ENCODE measurements at regions of chr19 and their contacts with region 1.

Region 1: GRCh38 chr19:1064661-1065605 is 2.0 kb upstream of the ARHGAP45 start:
- DNase-seq: peak in 9 of 10 donors; percentile 59 to 78 (median 68)
- ATAC-seq: peak; percentile 21 to 30
- H3K4me3 Mint-ChIP-seq: peak overlapping the region; percentile 40 to 92 (median 74)
- H3K27ac Mint-ChIP-seq: peak overlapping the region in 9 of 10 donors; percentile 76 to 94 (median 91)
- H3K4me1 Mint-ChIP-seq: peaks cover 16 to 46% (median 34%) of the 10 kb centered on the region in 4 donors
- H3K27me3 Mint-ChIP-seq: no peaks in the 10 kb centered on the region

Region 2: DNA sequence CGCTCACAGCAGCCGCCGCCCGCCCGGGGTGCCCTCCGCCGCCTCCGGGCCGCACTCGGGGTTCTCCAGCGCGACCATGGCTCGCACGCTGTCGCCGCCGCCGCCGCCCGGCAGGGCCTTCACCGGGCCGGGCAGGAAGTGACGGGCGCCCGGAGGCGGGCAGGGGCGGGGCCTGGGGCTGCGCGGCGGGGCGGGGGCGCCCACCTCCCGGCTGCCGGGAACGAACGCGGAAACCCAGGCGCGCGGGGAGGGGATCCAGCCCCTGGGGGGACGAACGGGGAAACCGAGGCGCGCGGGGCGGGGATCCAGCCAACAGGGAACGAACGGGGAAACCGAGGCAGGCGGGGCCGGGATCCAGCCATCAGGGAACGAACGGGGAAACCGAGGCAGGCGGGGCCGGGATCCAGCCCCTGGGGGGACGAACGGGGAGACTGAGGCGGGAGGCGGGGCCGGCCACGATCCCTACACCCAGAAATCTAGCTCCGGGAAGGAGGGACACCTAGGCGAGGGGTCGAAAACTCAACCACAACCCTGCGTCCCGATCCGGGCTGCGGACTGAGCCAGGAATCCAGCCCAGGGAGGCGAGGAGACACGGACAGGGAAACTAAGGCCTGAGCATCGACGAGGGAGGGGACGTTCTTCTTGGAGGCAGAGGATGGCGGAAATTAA is 151.7 kb before region 1 on chr19 and contains the start of gene R3HDM4:
- POLR2A ChIA-PET with region 1: interaction called, 13 read pairs
- DNase-seq: peak; percentile 75 to 89 (median 82)
- ATAC-seq: peak; percentile 40 to 46
- H3K4me3 Mint-ChIP-seq: peak within 1 kb of the TSS; percentile 81 to 92 (median 85)
- H3K27ac Mint-ChIP-seq: peak within 1 kb of the TSS; percentile 80 to 98 (median 94)
- H3K4me1 Mint-ChIP-seq: peaks cover 15 to 41% (median 31%) of the 10 kb centered on the region in 4 donors
- H3K27me3 Mint-ChIP-seq: peaks cover 0 to 2% (median 0%) of the 10 kb centered on the region in 5 donors
- polyA plus RNA-seq, gene R3HDM4: 137 to 238 (median 182) TPM

Region 3: GRCh38 chr19:1020868-1021425 is 44.0 kb before region 1 on chr19 and contains the start of gene TMEM259:
- POLR2A ChIA-PET with region 1: interaction called, 1,566 read pairs
- DNase-seq: peak in 9 of 10 donors; percentile 94 to 99 (median 97)
- ATAC-seq: peak; percentile 84 to 86
- H3K4me3 Mint-ChIP-seq: peak within 1 kb of the TSS; percentile 86 to 94 (median 91)
- H3K27ac Mint-ChIP-seq: peak within 1 kb of the TSS; percentile 96 to 100 (median 99)
- H3K4me1 Mint-ChIP-seq: peaks cover 18 to 53% (median 47%) of the 10 kb centered on the region in 4 donors
- H3K27me3 Mint-ChIP-seq: peaks cover 0 to 6% (median 0%) of the 10 kb centered on the region in 5 donors
- polyA plus RNA-seq, gene TMEM259: 37.9 to 77.0 (median 52.0) TPM

Region 4: DNA sequence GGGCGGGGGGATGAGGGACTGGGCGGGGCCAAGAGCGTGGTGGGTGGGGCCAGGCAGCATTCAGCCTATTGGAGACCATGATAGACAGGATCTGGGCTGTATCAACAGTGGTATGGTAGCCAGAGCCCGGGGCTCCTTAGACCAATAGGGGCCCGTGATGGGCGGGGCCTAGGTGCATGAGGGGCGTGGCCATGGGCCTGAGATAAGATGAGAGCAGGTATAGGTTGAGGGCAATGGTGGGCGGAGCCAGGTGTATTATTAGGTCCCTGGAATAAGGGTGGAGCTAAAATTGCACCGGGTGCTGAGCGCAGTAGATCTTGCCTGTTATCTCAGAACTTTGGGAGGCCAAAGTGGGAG is 19.7 kb before region 1 on chr19:
- POLR2A ChIA-PET with region 1: interaction called, 768 read pairs
- DNase-seq: peak in 5 of 10 donors; percentile 63 to 72 (median 67)
- ATAC-seq: peak; percentile 28 to 74
- H3K4me3 Mint-ChIP-seq: peak overlapping the region in 1 of 10 donors; percentile 35
- H3K27ac Mint-ChIP-seq: peak overlapping the region in 6 of 10 donors; percentile 13 to 76 (median 60)
- H3K4me1 Mint-ChIP-seq: peaks cover 6 to 23% (median 10%) of the 10 kb centered on the region in 4 donors
- H3K27me3 Mint-ChIP-seq: no peaks in the 10 kb centered on the region

Region 5: DNA sequence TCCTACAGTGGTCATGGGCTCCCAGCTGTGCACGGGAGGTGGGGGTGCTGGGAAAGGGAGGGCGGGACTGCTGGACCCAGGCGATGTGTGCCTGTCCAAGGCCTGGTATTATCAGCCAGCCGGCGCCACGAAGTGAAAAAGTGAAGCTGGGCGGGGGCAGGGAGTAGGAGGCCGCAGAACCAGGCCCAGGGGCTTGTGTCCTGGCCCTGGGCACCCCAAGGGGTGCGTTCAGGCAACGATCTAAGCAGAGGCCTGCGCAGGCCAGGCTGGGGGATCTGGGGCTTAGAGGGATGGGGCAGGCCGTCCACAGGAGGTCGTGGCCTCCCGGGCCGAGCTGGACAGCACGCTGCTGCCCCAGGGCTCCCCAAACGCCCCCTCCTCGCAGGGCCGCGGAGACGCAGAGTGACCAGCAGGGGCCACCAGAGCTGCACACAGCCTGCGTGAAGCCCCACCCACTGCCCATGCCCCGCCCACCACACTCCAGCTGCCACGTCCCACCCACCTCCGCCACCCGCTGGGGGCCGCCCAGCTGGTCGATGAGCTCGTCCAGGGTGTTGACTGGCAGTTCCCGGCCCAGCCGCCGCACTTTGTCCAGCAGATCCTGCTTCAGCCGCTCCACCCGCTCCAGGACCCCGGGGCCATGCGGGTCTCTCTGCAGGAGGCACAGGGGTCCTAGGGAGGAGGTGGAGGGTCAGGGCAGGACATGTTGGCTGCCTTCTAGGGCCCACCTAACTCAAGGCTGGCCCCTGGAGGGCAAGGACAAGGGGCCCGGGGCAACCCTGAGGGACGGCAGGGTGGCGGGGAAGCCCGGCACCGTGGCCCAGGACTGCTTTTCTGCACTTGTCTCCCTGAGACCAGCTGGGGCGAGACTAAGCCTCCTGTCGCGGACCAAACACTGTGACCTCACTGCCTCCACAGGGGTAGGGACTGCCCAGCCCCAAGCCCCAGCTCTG is 48.4 kb after region 1 on chr19:
- POLR2A ChIA-PET with region 1: interaction called, 621 read pairs
- DNase-seq: peak; percentile 79 to 94 (median 87)
- ATAC-seq: peak; percentile 90 to 95
- H3K4me3 Mint-ChIP-seq: peak overlapping the region in 3 of 10 donors; percentile 4 to 30 (median 19)
- H3K27ac Mint-ChIP-seq: peak overlapping the region in 5 of 10 donors; percentile 29 to 82 (median 69)
- H3K4me1 Mint-ChIP-seq: peaks cover 0 to 7% (median 1%) of the 10 kb centered on the region in 4 donors
- H3K27me3 Mint-ChIP-seq: no peaks in the 10 kb centered on the region

Measured in naive thymus-derived CD8-positive, alpha-beta T cell (primary cell).